Head of caudate nucleus (tissue), 42 donors: ENCODE measurements at regions of chr6 and their contacts with region 1.

Region 1: DNA sequence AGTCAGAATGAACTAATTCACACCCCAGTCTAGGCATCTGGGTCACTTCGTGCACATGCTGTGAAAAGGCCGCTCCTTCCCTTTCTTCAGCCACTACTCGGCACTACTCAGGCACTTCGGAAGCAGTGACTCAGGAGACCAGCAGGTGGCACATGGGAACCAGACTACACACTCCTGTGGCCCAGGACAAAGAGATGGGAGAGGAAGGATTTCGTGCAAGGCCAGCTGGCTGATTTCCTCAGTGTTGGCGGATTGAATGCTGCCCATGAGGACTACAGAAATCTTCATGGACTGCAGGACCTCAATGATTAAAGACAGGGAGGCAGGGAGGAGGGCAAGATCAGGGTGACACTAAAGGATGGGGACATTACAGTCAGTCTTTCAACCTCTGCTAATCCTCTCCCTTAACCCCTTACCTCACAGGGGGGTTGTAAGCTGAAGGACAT is 117.8 kb upstream of the SPACA1 start:
- DNase-seq: peak; percentile 68 to 92 (median 84)

Region 2: DNA sequence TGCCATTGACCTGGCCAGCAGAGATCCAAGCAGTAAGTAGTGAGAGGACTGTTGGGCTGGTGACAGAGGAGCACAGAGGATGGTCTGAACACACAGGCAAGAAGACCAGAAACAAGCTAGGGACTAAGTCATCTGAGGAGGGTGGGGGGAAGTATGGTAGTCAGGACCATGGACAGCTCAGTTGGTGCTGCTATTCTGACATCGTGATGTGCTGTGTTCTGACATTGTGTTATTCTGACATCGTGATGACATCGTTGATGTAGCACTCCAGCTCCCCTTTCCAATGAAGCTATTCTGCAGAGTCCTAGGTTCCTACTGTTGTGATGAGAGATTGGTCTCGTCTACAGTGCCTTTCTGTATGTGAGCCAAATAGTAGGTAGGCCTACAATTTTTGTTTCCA is 493.4 kb before region 1 on chr6:
- intact Hi-C with region 1: no loop called
- DNase-seq: peak in 11 of 42 donors; percentile 1 to 53 (median 16)

Region 3: DNA sequence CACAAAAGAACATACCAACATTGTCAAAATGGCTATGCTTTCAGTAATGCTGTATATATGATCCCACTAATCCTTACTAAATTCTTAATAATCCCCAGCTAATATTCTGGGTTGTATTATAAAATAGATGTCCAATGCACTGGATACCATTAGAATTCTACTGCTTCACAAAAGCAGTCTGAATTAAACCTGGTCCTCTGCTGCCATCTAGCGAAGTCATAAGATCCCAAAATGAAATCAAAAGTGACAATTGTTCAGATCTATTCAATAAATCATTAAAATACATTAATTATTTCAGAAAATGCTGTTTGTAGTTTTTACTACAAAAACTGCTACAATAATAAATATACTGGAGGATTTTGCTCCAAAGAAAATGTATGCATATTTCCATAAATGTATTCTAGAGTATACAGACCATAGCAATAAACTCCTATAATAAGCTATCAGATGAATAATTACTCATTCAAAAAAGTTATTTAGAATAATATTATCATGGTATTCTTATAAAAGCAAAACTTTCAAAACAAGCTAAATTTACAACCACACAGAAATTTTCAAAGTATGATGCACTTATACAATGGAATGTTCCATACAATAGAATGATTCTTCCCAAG is 941.0 kb after region 1 on chr6:
- intact Hi-C with region 1: loop called (anchors 10 kb)
- DNase-seq: peak in 26 of 42 donors; percentile 10 to 79 (median 48)